IMR-90 (cell line): ENCODE measurements at regions of chr6 and their contacts with region 1.

Region 1: GRCh38 chr6:152636609-152637295 is 410 bp downstream of the SYNE1 start:
- DNase-seq: peak; percentile 16
- ATAC-seq: peak; percentile 85
- H3K4me3 ChIP-seq: peak overlapping the region; percentile 73
- H3K27ac ChIP-seq: peak overlapping the region; percentile 47
- H3K4me1 ChIP-seq: peaks cover 6% of the 10 kb centered on the region
- H3K27me3 ChIP-seq: no peaks in the 10 kb centered on the region
- CTCF ChIP-seq: no peak
- POLR2A ChIP-seq: no peak
- RAD21 ChIP-seq: no peak

Region 2: DNA sequence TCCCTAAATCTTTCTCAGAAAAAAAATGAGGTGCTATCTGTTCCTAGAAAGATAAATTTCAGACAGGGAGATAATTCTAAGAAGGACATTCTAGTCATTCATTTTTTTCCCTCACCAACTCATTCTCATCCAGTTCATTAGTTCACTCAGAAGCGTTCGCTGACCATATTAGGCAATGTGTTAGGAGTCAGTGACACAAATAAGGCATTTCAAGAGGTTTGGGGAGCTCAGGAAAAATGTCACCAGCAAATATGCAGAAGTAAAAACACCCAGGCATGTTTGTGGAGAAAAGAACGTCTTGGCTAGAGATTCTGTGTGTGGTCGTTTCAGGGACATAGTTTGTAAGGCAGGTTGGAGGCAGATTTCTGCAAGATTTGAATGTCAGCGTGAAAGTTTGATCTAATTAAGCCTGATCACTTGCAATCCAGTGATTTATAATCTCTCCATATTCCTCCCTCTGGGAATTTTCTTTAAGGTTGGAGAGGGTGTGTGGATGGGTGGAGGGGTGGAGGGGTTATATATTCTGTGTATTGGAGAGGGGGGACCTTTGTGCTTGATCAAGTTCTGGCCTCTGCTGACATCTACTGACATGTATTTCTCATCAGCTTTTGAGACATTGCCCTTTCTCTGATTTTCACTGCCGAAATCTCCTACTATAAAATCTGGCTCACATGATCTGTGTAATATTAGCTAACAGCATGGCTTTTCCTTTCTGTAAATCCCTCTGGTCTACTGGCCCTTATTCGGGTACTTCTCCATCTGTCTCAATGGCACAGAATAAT is 64.5 kb after region 1 on chr6:
- CTCF ChIA-PET with region 1: no interaction called
- POLR2A ChIA-PET with region 1: no interaction called
- dilution Hi-C with region 1: no loop called
- in situ Hi-C with region 1: no loop called
- intact Hi-C with region 1: loop called (anchors 5 kb)
- DNase-seq: peak; percentile 62
- ATAC-seq: peak; percentile 46
- H3K4me3 ChIP-seq: no peak overlapping the region
- H3K27ac ChIP-seq: peak overlapping the region; percentile 100
- H3K4me1 ChIP-seq: peaks cover 17% of the 10 kb centered on the region
- H3K27me3 ChIP-seq: no peaks in the 10 kb centered on the region
- CTCF ChIP-seq: peak; percentile 33; the same call in 1 of the 2 replicates
- POLR2A ChIP-seq: no peak
- RAD21 ChIP-seq: peak; percentile 37; the same call in 1 of the 2 replicates